ENCODE measurements at regions of chr4 and their contacts with region 1.

Region 1: GRCh38 chr4:6974138-6974848 is 64.7 kb downstream of the TBC1D14 start:
- DNase-seq: peak; percentile 87 to 95
- H3K4me3 ChIP-seq: no peak overlapping the region
- H3K27ac ChIP-seq: 0 out of 2 replicates have a peak overlapping the region, but pooled peaks have one; percentile 8
- H3K4me1 ChIP-seq: peaks cover 15 to 23% (median 19%) of the 10 kb centered on the region in 4 experiments; a peak in 6 of 7 replicates
- H3K27me3 ChIP-seq: no peaks in the 10 kb centered on the region
- CTCF ChIP-seq: peak; percentile 73 to 98 (median 75)
- EP300 ChIP-seq: no peak
- POLR2A ChIP-seq: no peak
- RAD21 ChIP-seq: peak; percentile 58 to 77

Region 2: GRCh38 chr4:6917461-6918271 is 56.6 kb before region 1 on chr4:
- CTCF ChIA-PET with region 1: interaction called, 20 read pairs
- POLR2A ChIA-PET with region 1: interaction called, 5 read pairs
- DNase-seq: no peak
- H3K4me3 ChIP-seq: no peak overlapping the region
- H3K27ac ChIP-seq: no peak overlapping the region
- H3K4me1 ChIP-seq: peaks cover 0 to 22% (median 9%) of the 10 kb centered on the region in 4 experiments; a peak in 5 of 7 replicates
- H3K27me3 ChIP-seq: no peaks in the 10 kb centered on the region
- CTCF ChIP-seq: peak in 2 of 3 experiments; percentile 36 to 80; a peak in 2 of 4 replicates
- EP300 ChIP-seq: no peak
- POLR2A ChIP-seq: no peak
- RAD21 ChIP-seq: peak; percentile 11 to 30; a peak in 2 of 4 replicates

Region 3: GRCh38 chr4:6955261-6955911 is 18.9 kb before region 1 on chr4:
- CTCF ChIA-PET with region 1: interaction called, 17 read pairs
- POLR2A ChIA-PET with region 1: interaction called, 5 read pairs
- DNase-seq: no peak
- H3K4me3 ChIP-seq: no peak overlapping the region
- H3K27ac ChIP-seq: no peak overlapping the region
- H3K4me1 ChIP-seq: peaks cover 0 to 20% (median 12%) of the 10 kb centered on the region in 4 experiments; a peak in 6 of 7 replicates
- H3K27me3 ChIP-seq: no peaks in the 10 kb centered on the region
- CTCF ChIP-seq: no peak
- EP300 ChIP-seq: no peak
- POLR2A ChIP-seq: no peak
- RAD21 ChIP-seq: no peak

Region 4: DNA sequence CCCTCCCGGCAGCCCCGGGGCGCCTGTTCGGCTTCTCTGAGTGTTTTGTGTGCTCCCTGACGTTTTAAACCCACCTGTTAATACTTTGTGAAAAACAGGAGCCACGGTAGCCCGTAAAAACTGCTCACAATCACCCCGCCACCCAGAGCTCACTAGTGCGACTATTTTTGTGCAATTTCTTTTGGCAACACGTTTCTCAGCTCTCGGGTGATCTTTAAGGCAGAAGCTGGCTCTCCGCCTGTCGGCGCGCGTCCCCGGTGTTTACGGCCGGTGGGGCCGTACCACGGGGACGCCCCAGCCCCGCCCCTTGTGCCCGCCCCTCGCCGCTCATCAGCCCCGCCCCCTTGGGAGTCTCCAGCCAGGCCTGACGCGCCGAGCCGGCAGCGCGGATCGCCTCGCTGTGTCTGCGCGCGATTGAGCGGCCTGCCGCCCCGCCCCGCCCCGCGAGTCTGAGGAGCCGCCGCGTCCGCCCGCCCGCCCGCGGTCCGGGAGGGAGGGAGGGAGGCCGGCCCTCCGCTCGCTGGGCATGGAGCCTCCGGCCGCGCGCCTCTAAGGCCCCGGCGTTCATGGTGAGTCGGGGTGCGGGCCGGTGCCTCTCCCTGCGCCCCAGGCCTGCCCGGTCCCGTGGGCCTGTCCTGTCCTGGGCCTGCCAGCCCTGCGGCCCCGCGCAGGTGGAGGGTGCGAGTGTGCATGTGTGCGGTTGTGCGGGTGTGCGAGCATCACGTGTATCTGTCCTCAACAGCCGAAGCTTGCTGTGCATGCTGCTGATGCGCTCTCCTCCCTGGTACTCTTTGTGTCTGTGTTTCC is 12.7 kb after region 1 on chr4:
- CTCF ChIA-PET with region 1: interaction called, 20 read pairs
- POLR2A ChIA-PET with region 1: interaction called, 29 read pairs
- DNase-seq: peak; percentile 78 to 93
- H3K4me3 ChIP-seq: peak overlapping the region; percentile 66 to 93 (median 80)
- H3K27ac ChIP-seq: peak overlapping the region; percentile 75
- H3K4me1 ChIP-seq: peaks cover 5 to 17% (median 8%) of the 10 kb centered on the region in 4 experiments
- H3K27me3 ChIP-seq: no peaks in the 10 kb centered on the region
- CTCF ChIP-seq: no peak
- EP300 ChIP-seq: peak in 1 of 2 experiments; percentile 4; a peak in 1 of 3 replicates
- POLR2A ChIP-seq: peak; percentile 32 to 63; a peak in 2 of 3 replicates
- RAD21 ChIP-seq: peak in 1 of 2 experiments; percentile 8; a peak in 1 of 4 replicates

Region 5: DNA sequence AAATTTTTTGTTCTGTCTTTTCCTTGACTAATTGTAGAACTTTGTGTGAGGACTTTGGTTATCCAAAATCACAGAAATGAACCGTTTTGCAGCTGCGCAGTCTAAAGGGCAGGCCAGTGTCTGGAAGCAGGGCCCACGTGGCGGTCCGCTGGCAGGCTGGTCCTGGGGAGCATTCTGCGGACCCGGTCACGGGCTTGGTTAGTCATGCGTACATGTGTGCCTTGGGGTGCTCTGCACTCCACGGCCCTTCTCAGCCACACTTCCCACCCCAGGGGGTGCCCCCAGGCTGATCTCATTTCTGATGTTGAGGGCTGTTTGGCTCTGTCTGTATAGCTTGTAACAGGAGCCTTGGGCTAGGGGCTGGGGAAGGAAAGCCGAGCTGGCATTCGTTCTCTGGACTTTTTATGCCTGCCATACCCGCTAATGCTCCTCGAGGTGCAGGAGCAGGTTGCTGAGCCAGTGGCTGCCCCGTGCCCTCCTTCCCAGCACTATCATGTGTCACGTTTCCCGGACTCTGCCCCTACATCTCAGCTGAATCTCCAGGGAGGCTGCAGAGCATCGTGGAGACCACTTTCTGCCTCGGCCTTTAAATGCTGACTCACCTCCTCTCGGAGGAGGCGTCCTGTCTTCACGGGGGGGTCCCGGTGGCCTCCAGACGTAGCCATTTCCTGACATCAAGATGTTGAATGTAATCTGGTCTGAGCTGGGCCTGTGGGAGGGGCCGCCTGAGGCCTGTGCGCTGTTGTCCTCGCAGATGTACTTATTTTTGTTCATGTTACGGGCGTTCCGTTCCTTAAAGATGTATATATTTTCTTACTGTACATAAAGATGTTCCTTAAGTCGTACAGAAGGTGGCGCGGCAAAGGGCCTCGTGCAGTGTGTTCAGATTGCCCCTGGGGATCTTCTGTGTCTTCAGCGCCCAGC is 57.5 kb after region 1 on chr4:
- CTCF ChIA-PET with region 1: no interaction called
- POLR2A ChIA-PET with region 1: no interaction called
- DNase-seq: no peak
- H3K4me3 ChIP-seq: no peak overlapping the region
- H3K27ac ChIP-seq: no peak overlapping the region
- H3K4me1 ChIP-seq: no peaks in the 10 kb centered on the region
- H3K27me3 ChIP-seq: no peaks in the 10 kb centered on the region
- CTCF ChIP-seq: no peak
- EP300 ChIP-seq: no peak
- POLR2A ChIP-seq: no peak
- RAD21 ChIP-seq: no peak

Region 6: DNA sequence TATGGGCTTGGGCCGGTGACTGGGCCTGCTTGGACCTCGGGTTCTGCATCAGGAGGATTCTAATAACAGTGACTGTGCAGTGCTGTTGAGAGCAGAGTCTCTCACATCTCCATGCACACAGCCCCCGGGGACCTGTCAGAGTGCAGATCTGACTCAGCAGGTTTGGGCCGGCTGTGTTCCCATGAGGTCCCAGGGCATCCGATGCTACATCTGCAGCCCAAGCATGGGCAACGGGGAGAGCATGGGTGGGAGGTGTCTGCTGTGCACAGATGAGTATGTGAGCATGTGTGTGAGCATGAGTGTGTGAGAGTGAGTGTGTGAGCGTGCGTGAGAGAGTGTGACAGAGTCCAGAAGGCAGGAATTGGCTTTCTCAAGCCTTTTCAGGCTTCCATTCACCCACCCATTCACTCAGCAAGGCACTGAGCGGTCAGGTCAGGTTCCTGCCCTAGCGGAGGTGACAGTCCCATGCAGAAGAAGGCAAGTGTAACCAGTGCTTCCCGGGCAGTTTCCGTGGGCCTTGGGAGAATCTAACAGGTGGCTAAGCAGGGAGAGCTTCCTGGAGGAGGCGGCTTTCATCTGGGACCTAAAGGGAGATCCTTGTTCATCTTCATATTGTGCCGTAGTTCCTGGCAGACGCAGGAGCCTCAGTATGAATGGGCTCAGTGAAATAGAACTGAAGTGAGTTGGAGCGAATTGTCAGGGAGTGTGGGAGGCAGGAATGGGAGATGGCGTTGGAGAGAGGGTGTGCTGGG is 280.6 kb after region 1 on chr4:
- CTCF ChIA-PET with region 1: no interaction called
- POLR2A ChIA-PET with region 1: no interaction called
- DNase-seq: no peak
- H3K4me3 ChIP-seq: no peak overlapping the region
- H3K27ac ChIP-seq: no peak overlapping the region
- H3K4me1 ChIP-seq: no peaks in the 10 kb centered on the region; a peak in 2 of 7 replicates
- H3K27me3 ChIP-seq: no peaks in the 10 kb centered on the region
- CTCF ChIP-seq: no peak
- EP300 ChIP-seq: no peak
- POLR2A ChIP-seq: no peak
- RAD21 ChIP-seq: no peak

Region 7: DNA sequence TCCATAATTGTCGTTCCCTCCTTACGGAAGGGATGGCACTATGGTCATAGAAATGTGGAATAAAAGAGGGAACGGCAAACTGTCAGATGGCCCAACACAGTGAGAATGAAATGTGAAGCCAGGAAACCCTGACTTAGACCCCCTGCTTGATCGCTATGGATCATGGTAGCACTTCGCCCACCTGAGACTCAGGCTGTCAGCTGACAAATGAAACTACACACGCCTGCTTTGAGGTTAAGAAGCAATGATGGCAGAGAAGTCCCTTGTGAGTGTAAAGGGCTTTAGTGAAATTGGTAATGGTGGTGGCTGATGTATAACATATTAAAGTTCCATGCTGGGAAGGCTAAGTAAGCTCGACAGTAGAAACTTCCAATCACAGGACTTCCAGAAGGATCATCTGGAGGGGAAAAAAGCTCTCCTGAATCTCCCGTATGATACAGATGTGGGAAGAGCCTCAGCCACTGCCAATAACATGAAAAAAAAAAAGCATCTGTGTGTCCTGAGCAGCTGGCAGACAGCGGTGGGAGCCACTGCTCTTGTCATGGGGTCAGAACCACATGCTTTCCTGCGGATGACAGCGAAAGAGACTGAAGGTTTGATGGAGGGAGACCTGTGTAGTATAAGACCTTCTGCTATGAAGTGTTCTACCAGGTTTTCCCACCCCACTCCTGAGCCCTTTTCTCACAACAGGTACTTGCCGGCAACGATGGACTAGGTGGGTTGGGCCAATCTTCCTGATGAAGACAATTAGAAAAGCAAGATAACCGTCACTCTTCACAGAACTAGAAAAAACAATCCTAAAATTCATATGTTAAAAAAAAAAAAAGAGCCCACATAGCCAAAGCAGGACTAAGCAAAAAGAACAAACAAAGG is 857.8 kb after region 1 on chr4:
- CTCF ChIA-PET with region 1: no interaction called
- POLR2A ChIA-PET with region 1: no interaction called
- DNase-seq: no peak
- H3K4me3 ChIP-seq: no peak overlapping the region
- H3K27ac ChIP-seq: no peak overlapping the region
- H3K4me1 ChIP-seq: peaks cover 0 to 9% (median 5%) of the 10 kb centered on the region in 4 experiments; a peak in 3 of 7 replicates
- H3K27me3 ChIP-seq: no peaks in the 10 kb centered on the region
- CTCF ChIP-seq: no peak
- EP300 ChIP-seq: no peak
- POLR2A ChIP-seq: no peak
- RAD21 ChIP-seq: no peak